Naive thymus-derived CD4-positive, alpha-beta T cell (primary cell): ENCODE measurements at regions of chr11 and their contacts with region 1.

Region 1: GRCh38 chr11:81787584-81788049 is 946.0 kb downstream of the FAM181B start:
- DNase-seq: peak in 7 of 9 donors; percentile 11 to 54 (median 46)
- ATAC-seq: peak; percentile 48
- H3K4me3 ChIP-seq: no peak overlapping the region
- H3K4me3 Mint-ChIP-seq: no peak overlapping the region
- H3K27ac ChIP-seq: no peak overlapping the region
- H3K27ac Mint-ChIP-seq: peak overlapping the region in 1 of 9 donors; percentile 51
- H3K4me1 ChIP-seq: peaks cover 0 to 7% of the 10 kb centered on the region in 2 donors
- H3K4me1 Mint-ChIP-seq: peaks cover under 1 to 16% (median 9%) of the 10 kb centered on the region in 7 donors
- H3K27me3 ChIP-seq: no peaks in the 10 kb centered on the region
- H3K27me3 Mint-ChIP-seq: no peaks in the 10 kb centered on the region

Region 2: GRCh38 chr11:81548123-81548522 is 239.5 kb before region 1 on chr11:
- CTCF ChIA-PET with region 1: no interaction called
- POLR2A ChIA-PET with region 1: no interaction called
- intact Hi-C with region 1: no loop called
- DNase-seq: no peak
- ATAC-seq: no peak
- H3K4me3 ChIP-seq: no peak overlapping the region
- H3K4me3 Mint-ChIP-seq: no peak overlapping the region
- H3K27ac ChIP-seq: no peak overlapping the region
- H3K27ac Mint-ChIP-seq: no peak overlapping the region
- H3K4me1 ChIP-seq: no peaks in the 10 kb centered on the region
- H3K4me1 Mint-ChIP-seq: no peaks in the 10 kb centered on the region
- H3K27me3 ChIP-seq: no peaks in the 10 kb centered on the region
- H3K27me3 Mint-ChIP-seq: no peaks in the 10 kb centered on the region

Region 3: GRCh38 chr11:81644239-81644840 is 143.3 kb before region 1 on chr11:
- CTCF ChIA-PET with region 1: no interaction called
- POLR2A ChIA-PET with region 1: no interaction called
- intact Hi-C with region 1: loop called in 1 of 2 experiments (anchors 1 kb)
- DNase-seq: peak in 7 of 9 donors; percentile 14 to 43 (median 34)
- ATAC-seq: peak; percentile 64
- H3K4me3 ChIP-seq: no peak overlapping the region
- H3K4me3 Mint-ChIP-seq: no peak overlapping the region
- H3K27ac ChIP-seq: no peak overlapping the region
- H3K27ac Mint-ChIP-seq: no peak overlapping the region
- H3K4me1 ChIP-seq: no peaks in the 10 kb centered on the region
- H3K4me1 Mint-ChIP-seq: peaks cover 0 to 3% (median 0%) of the 10 kb centered on the region in 7 donors
- H3K27me3 ChIP-seq: peaks cover 0 to 3% of the 10 kb centered on the region in 2 donors
- H3K27me3 Mint-ChIP-seq: peaks cover 13 to 39% (median 21%) of the 10 kb centered on the region in 5 donors

Region 4: GRCh38 chr11:81717695-81718094 is 69.9 kb before region 1 on chr11:
- CTCF ChIA-PET with region 1: no interaction called
- POLR2A ChIA-PET with region 1: no interaction called
- intact Hi-C with region 1: no loop called
- DNase-seq: no peak
- ATAC-seq: no peak
- H3K4me3 ChIP-seq: no peak overlapping the region
- H3K4me3 Mint-ChIP-seq: no peak overlapping the region
- H3K27ac ChIP-seq: no peak overlapping the region
- H3K27ac Mint-ChIP-seq: no peak overlapping the region
- H3K4me1 ChIP-seq: no peaks in the 10 kb centered on the region
- H3K4me1 Mint-ChIP-seq: no peaks in the 10 kb centered on the region
- H3K27me3 ChIP-seq: no peaks in the 10 kb centered on the region
- H3K27me3 Mint-ChIP-seq: peaks cover 0 to 2% (median 0%) of the 10 kb centered on the region in 5 donors

Region 5: GRCh38 chr11:81749245-81749644 is 38.4 kb before region 1 on chr11:
- CTCF ChIA-PET with region 1: no interaction called
- POLR2A ChIA-PET with region 1: no interaction called
- intact Hi-C with region 1: no loop called
- DNase-seq: no peak
- ATAC-seq: no peak
- H3K4me3 ChIP-seq: no peak overlapping the region
- H3K4me3 Mint-ChIP-seq: no peak overlapping the region
- H3K27ac ChIP-seq: no peak overlapping the region
- H3K27ac Mint-ChIP-seq: no peak overlapping the region
- H3K4me1 ChIP-seq: no peaks in the 10 kb centered on the region
- H3K4me1 Mint-ChIP-seq: peaks cover 0 to 9% (median 4%) of the 10 kb centered on the region in 7 donors
- H3K27me3 ChIP-seq: peaks cover 0 to 5% of the 10 kb centered on the region in 2 donors
- H3K27me3 Mint-ChIP-seq: peaks cover 0 to 10% (median 5%) of the 10 kb centered on the region in 5 donors

Region 6: GRCh38 chr11:81963018-81963417 is 175.4 kb after region 1 on chr11:
- CTCF ChIA-PET with region 1: interaction called, 12 read pairs
- POLR2A ChIA-PET with region 1: no interaction called
- intact Hi-C with region 1: loop called (anchors 1 kb)
- DNase-seq: peak in 3 of 9 donors; percentile 4 to 10 (median 5)
- ATAC-seq: no peak
- H3K4me3 ChIP-seq: no peak overlapping the region
- H3K4me3 Mint-ChIP-seq: peak overlapping the region in 6 of 10 donors; percentile 37 to 62 (median 45)
- H3K27ac ChIP-seq: no peak overlapping the region
- H3K27ac Mint-ChIP-seq: no peak overlapping the region
- H3K4me1 ChIP-seq: peaks cover 0 to 8% of the 10 kb centered on the region in 2 donors
- H3K4me1 Mint-ChIP-seq: peaks cover 0 to 22% (median 16%) of the 10 kb centered on the region in 7 donors
- H3K27me3 ChIP-seq: no peaks in the 10 kb centered on the region
- H3K27me3 Mint-ChIP-seq: peaks cover 0 to 3% (median 0%) of the 10 kb centered on the region in 5 donors

Region 7: GRCh38 chr11:82117362-82117761 is 329.7 kb after region 1 on chr11:
- CTCF ChIA-PET with region 1: no interaction called
- POLR2A ChIA-PET with region 1: no interaction called
- intact Hi-C with region 1: loop called in 1 of 2 experiments (anchors 10 kb)
- DNase-seq: no peak
- ATAC-seq: no peak
- H3K4me3 ChIP-seq: no peak overlapping the region
- H3K4me3 Mint-ChIP-seq: no peak overlapping the region
- H3K27ac ChIP-seq: no peak overlapping the region
- H3K27ac Mint-ChIP-seq: no peak overlapping the region
- H3K4me1 ChIP-seq: no peaks in the 10 kb centered on the region
- H3K4me1 Mint-ChIP-seq: no peaks in the 10 kb centered on the region
- H3K27me3 ChIP-seq: no peaks in the 10 kb centered on the region
- H3K27me3 Mint-ChIP-seq: peaks cover 0 to 18% (median 8%) of the 10 kb centered on the region in 5 donors

Region 8: DNA sequence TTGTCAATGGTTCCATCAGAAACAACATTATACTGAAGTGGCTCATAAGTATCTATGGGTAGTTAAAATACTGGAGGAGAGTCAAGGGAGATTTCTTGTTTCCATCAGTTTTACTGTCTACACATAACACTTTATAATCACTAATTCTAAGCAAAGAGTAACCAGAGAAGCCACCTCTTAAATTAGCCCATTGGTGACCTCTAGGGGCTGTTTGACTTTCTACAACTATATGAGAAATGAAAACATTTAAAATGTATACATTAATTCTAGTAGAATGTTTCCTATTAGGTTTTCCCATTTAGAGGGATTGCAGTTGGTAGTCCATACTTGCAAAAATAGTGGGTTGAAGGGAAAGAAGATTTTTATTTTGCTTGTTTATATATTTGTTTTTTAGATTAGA is 441.7 kb after region 1 on chr11:
- CTCF ChIA-PET with region 1: interaction called, 13 read pairs
- POLR2A ChIA-PET with region 1: no interaction called
- intact Hi-C with region 1: loop called in 1 of 2 experiments (anchors 1 kb)
- DNase-seq: peak in 5 of 9 donors; percentile 0 to 21 (median 7)
- ATAC-seq: no peak
- H3K4me3 ChIP-seq: no peak overlapping the region
- H3K4me3 Mint-ChIP-seq: no peak overlapping the region
- H3K27ac ChIP-seq: no peak overlapping the region
- H3K27ac Mint-ChIP-seq: no peak overlapping the region
- H3K4me1 ChIP-seq: no peaks in the 10 kb centered on the region
- H3K4me1 Mint-ChIP-seq: no peaks in the 10 kb centered on the region
- H3K27me3 ChIP-seq: peaks cover 0 to 2% of the 10 kb centered on the region in 2 donors
- H3K27me3 Mint-ChIP-seq: peaks cover 0 to 4% (median 0%) of the 10 kb centered on the region in 5 donors